Left lung (tissue), 14 donors: ENCODE measurements at regions of chr20 and their contacts with region 1.

Region 1: DNA sequence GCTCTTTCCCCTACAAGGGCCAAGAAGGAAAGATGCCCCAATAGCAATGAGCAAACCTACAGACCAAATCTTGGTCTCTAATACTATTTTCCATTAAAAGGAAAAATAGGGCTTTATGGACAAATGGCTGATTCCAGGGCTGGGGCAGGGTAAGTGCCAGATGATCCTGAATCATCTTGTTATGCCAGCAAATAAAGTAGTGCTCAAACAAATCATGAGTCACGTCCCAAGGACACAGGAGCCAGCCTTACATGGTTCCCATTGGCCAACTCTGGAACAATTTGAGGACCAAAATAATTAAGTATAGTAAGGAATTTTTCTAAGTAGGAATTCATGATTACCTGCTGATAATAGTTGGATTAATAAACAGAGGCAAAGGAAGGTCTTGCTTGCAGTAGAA is 53.2 kb upstream of the NKX2-4 start:
- DNase-seq: no peak
- ATAC-seq: no peak
- H3K4me3 ChIP-seq: no peak overlapping the region
- H3K27ac ChIP-seq: no peak overlapping the region
- H3K4me1 ChIP-seq: no peaks in the 10 kb centered on the region
- H3K27me3 ChIP-seq: peaks cover 0 to 18% of the 10 kb centered on the region in 2 donors
- CTCF ChIP-seq: no peak

Region 2: DNA sequence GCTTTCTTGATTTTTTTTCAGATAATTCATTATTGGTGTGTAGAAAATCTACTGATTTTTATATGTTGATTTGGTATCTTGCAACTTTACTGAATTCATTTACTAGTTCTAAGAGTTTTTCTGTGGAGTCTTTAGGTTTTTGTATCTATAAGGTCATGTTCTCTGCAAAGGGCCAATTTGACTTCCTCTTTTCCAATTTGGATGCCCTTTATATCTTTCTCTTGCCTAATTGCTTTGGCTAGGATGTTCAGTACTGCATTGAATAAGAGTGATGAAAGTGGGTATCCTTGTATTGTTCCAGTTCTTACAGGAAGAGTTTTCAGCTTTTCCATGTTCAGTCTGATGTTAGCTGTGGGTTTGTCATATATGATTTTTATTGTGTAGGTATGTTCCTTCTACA is 38.8 kb before region 1 on chr20:
- intact Hi-C with region 1: loop called in 1 of 2 experiments (anchors 5 kb)
- DNase-seq: no peak
- ATAC-seq: no peak
- H3K4me3 ChIP-seq: no peak overlapping the region
- H3K27ac ChIP-seq: no peak overlapping the region
- H3K4me1 ChIP-seq: no peaks in the 10 kb centered on the region
- H3K27me3 ChIP-seq: peaks cover 11 to 40% of the 10 kb centered on the region in 2 donors
- CTCF ChIP-seq: no peak